ENCODE measurements at regions of chr11 and their contacts with region 1.

Region 1: GRCh38 chr11:72683782-72684200 is 9.6 kb upstream of the PDE2A start:
- DNase-seq: no peak
- H3K4me3 ChIP-seq: no peak overlapping the region
- CTCF ChIP-seq: peak; percentile 93

Region 2: GRCh38 chr11:72483412-72484186 is 200.2 kb before region 1 on chr11:
- CTCF ChIA-PET with region 1: interaction called, 48 read pairs
- POLR2A ChIA-PET with region 1: no interaction called
- DNase-seq: no peak
- H3K4me3 ChIP-seq: no peak overlapping the region
- CTCF ChIP-seq: no peak

Region 3: DNA sequence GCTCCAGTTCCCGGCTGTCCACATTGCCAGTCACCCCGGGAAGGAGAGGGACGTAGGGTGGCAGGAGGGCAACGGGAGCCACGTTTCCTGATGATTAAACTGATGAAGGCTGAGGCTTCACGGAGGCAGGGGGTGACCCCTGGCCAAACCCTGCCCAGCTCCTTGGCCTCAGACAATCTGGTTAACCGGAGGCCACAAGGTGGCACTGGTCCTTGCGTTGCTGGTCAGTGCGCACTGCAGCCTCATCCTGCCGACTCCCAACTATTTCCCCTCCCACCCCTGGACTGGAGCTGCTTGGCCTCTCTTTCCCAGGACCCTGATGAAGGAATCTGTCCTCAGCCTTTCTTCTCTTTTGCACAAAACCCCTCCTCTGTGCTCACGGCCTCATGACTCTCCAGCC is 84.9 kb before region 1 on chr11:
- CTCF ChIA-PET with region 1: interaction called, 27 read pairs
- POLR2A ChIA-PET with region 1: no interaction called
- DNase-seq: no peak
- H3K4me3 ChIP-seq: no peak overlapping the region
- CTCF ChIP-seq: peak; percentile 47

Region 4: GRCh38 chr11:72668611-72669347 is 15.0 kb before region 1 on chr11:
- CTCF ChIA-PET with region 1: interaction called, 60 read pairs
- POLR2A ChIA-PET with region 1: no interaction called
- DNase-seq: no peak
- H3K4me3 ChIP-seq: no peak overlapping the region
- CTCF ChIP-seq: no peak

Region 5: GRCh38 chr11:72696866-72697700 is 13.3 kb after region 1 on chr11:
- CTCF ChIA-PET with region 1: interaction called, 33 read pairs
- POLR2A ChIA-PET with region 1: no interaction called
- DNase-seq: no peak
- H3K4me3 ChIP-seq: no peak overlapping the region
- CTCF ChIP-seq: no peak

Region 6: GRCh38 chr11:72703267-72704008 is 19.6 kb after region 1 on chr11:
- CTCF ChIA-PET with region 1: interaction called, 33 read pairs
- POLR2A ChIA-PET with region 1: no interaction called
- DNase-seq: peak; percentile 50
- H3K4me3 ChIP-seq: peak overlapping the region; percentile 13; the same call in 1 of the 2 replicates
- CTCF ChIP-seq: no peak